Activated naive CD4-positive, alpha-beta T cell treated with anti-CD3 and anti-CD28 coated beads for 36 hours (primary cell): ENCODE measurements at regions of chr5 and their contacts with region 1.

Region 1: GRCh38 chr5:141040771-141041426 is 10.3 kb upstream of the PCDHB1 start:
- DNase-seq: peak; percentile 85
- H3K4me3 Mint-ChIP-seq: no peak overlapping the region
- H3K27ac Mint-ChIP-seq: no peak overlapping the region
- H3K4me1 Mint-ChIP-seq: no peaks in the 10 kb centered on the region
- H3K27me3 Mint-ChIP-seq: peaks cover 21% of the 10 kb centered on the region

Region 2: DNA sequence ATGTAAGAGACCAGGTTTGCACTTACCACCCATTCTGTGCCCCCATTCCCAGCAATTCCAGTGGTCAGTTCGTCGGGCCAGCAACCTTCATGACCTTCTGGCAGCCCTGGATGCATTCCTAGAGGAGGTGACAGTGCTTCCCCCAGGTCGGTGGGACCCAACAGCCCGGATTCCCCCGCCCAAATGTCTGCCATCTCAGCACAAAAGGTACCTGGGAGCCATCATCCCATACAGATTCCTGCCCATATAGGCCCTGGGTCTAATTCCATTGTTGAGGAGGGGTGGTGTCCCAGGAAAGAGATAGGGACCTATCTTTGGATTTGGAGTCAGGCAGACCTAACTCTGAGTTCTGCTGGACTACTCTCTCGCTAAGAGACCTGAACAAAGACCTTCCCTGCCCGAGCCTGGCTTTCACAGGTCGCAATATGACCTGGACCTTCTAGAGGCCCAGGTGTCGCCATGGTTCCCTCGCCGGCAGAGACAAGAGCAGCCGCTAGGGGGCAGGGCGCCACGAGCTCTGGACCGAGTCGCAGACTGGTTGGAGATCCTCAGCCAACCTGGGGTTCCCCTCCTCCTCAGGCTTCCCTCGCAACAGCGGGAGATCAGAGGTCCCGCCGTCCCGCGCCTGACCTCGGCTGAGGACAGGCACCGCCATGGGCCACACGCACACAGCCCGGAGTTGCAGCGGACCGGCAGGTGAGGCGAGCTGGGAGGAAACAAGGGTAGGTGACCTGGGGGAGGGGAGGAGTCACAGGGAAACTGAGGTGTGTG is 677.9 kb before region 1 on chr5:
- CTCF ChIA-PET with region 1: no interaction called
- intact Hi-C with region 1: loop called (anchors 2 kb)
- DNase-seq: peak; percentile 92
- H3K4me3 Mint-ChIP-seq: peak overlapping the region; percentile 70
- H3K27ac Mint-ChIP-seq: no peak overlapping the region
- H3K4me1 Mint-ChIP-seq: peaks cover 2% of the 10 kb centered on the region
- H3K27me3 Mint-ChIP-seq: no peaks in the 10 kb centered on the region

Region 3: DNA sequence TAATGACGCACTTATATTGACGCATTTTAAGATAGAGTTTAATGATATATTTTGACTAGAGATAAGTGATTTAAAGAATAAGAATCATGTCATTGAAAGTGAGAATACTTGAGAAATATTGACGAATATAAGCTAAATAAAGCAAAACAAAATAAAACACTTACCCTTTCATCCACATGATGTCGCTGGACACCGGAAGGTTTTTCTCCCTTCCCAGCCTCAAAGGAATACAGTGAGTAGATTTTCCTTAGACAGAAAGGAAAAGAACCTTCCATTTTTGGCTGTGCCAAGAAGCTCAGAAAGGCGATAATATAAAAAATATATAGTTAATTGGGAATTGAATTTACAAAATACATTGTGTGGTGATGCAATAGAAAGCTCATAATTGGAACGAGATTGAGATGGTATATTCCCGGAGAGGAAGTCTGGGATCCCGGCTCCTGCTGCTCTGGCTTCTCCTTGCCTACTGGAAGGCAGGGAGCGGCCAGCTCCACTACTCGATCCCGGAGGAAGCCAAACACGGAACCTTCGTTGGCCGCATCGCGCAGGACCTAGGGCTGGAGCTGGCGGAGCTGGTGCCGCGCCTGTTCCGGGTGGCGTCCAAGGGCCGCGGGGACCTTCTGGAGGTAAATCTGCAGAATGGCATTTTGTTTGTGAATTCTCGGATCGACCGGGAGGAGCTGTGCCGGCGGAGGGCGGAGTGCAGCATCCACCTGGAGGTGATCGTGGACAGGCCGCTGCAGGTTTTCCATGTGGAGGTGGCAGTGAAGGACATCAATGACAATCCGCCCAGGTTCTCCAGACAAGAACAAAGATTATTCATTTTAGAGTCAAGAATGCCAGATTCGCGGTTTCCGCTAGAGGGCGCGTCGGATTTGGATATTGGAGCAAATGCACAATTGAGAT is 219.3 kb before region 1 on chr5 and contains the start of gene PCDHA5:
- CTCF ChIA-PET with region 1: interaction called, 3 read pairs
- intact Hi-C with region 1: loop called (anchors 5 kb)
- DNase-seq: peak; percentile 57
- H3K4me3 Mint-ChIP-seq: no peak within 1 kb of the TSS
- H3K27ac Mint-ChIP-seq: no peak within 1 kb of the TSS
- H3K4me1 Mint-ChIP-seq: no peaks in the 10 kb centered on the region
- H3K27me3 Mint-ChIP-seq: peaks cover 25% of the 10 kb centered on the region
- total RNA-seq, gene PCDHA5: not detected

Region 4: DNA sequence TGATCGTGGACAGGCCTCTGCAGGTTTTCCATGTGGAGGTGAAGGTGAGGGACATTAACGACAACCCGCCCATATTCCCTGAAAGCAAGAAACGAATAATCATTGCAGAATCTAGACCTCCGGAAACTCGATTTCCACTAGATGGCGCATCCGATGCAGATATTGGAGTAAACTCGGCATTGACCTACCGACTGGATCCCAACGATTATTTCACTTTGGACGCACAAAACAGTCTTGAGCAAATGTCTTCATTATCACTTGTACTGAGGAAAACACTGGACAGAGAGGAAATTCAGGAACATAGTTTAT is 158.4 kb before region 1 on chr5:
- CTCF ChIA-PET with region 1: no interaction called
- intact Hi-C with region 1: loop called (anchors 2 kb)
- DNase-seq: no peak
- H3K4me3 Mint-ChIP-seq: no peak overlapping the region
- H3K27ac Mint-ChIP-seq: peak overlapping the region; percentile 50
- H3K4me1 Mint-ChIP-seq: no peaks in the 10 kb centered on the region
- H3K27me3 Mint-ChIP-seq: peaks cover 33% of the 10 kb centered on the region

Region 5: GRCh38 chr5:141557681-141558136 is 516.8 kb after region 1 on chr5:
- CTCF ChIA-PET with region 1: no interaction called
- intact Hi-C with region 1: no loop called
- DNase-seq: peak; percentile 81
- H3K4me3 Mint-ChIP-seq: no peak overlapping the region
- H3K27ac Mint-ChIP-seq: peak overlapping the region; percentile 16
- H3K4me1 Mint-ChIP-seq: peaks cover 22% of the 10 kb centered on the region
- H3K27me3 Mint-ChIP-seq: no peaks in the 10 kb centered on the region